IMR-90 (cell line): ENCODE measurements at regions of chr7 and their contacts with region 1.

Region 1: GRCh38 chr7:3300651-3301378 is at the start of gene SDK1:
- DNase-seq: peak; percentile 85
- ATAC-seq: peak; percentile 95
- H3K4me3 ChIP-seq: peak within 1 kb of the TSS; percentile 44
- H3K27ac ChIP-seq: no peak within 1 kb of the TSS
- H3K4me1 ChIP-seq: no peaks in the 10 kb centered on the region; the same call in 1 of the 2 replicates
- H3K27me3 ChIP-seq: peaks cover 14% of the 10 kb centered on the region
- CTCF ChIP-seq: peak; percentile 88
- POLR2A ChIP-seq: no peak
- RAD21 ChIP-seq: peak; percentile 81
- total RNA-seq, gene SDK1: 1.1 and 1.6 TPM in 2 replicates

Region 2: GRCh38 chr7:3439333-3440030 is 138.7 kb after region 1 on chr7:
- CTCF ChIA-PET with region 1: no interaction called
- POLR2A ChIA-PET with region 1: no interaction called
- dilution Hi-C with region 1: no loop called
- in situ Hi-C with region 1: no loop called
- intact Hi-C with region 1: loop called (anchors 10 kb)
- DNase-seq: peak; percentile 99
- ATAC-seq: peak; percentile 87
- H3K4me3 ChIP-seq: no peak overlapping the region
- H3K27ac ChIP-seq: peak overlapping the region; percentile 61; the same call in 1 of the 2 replicates
- H3K4me1 ChIP-seq: peaks cover 7% of the 10 kb centered on the region
- H3K27me3 ChIP-seq: no peaks in the 10 kb centered on the region
- CTCF ChIP-seq: no peak
- POLR2A ChIP-seq: no peak
- RAD21 ChIP-seq: no peak

Region 3: GRCh38 chr7:3482147-3482964 is 181.5 kb after region 1 on chr7:
- CTCF ChIA-PET with region 1: no interaction called
- POLR2A ChIA-PET with region 1: no interaction called
- dilution Hi-C with region 1: no loop called
- in situ Hi-C with region 1: no loop called
- intact Hi-C with region 1: loop called (anchors 5 kb)
- DNase-seq: peak; percentile 35
- ATAC-seq: peak; percentile 81
- H3K4me3 ChIP-seq: no peak overlapping the region
- H3K27ac ChIP-seq: no peak overlapping the region
- H3K4me1 ChIP-seq: 0 out of 2 replicates have a peak, but pooled peaks cover 2% of the 10 kb centered on the region
- H3K27me3 ChIP-seq: no peaks in the 10 kb centered on the region
- CTCF ChIP-seq: peak; percentile 37
- POLR2A ChIP-seq: no peak
- RAD21 ChIP-seq: peak; percentile 39

Region 4: GRCh38 chr7:3668743-3669142 is 367.9 kb after region 1 on chr7:
- CTCF ChIA-PET with region 1: no interaction called
- POLR2A ChIA-PET with region 1: no interaction called
- dilution Hi-C with region 1: no loop called
- in situ Hi-C with region 1: no loop called
- intact Hi-C with region 1: loop called (anchors 10 kb)
- DNase-seq: no peak
- ATAC-seq: no peak
- H3K4me3 ChIP-seq: no peak overlapping the region
- H3K27ac ChIP-seq: no peak overlapping the region
- H3K4me1 ChIP-seq: peaks cover 3% of the 10 kb centered on the region; the same call in 1 of the 2 replicates
- H3K27me3 ChIP-seq: no peaks in the 10 kb centered on the region
- CTCF ChIP-seq: no peak
- POLR2A ChIP-seq: no peak
- RAD21 ChIP-seq: no peak

Region 5: GRCh38 chr7:3760651-3761050 is 459.8 kb after region 1 on chr7:
- CTCF ChIA-PET with region 1: no interaction called
- POLR2A ChIA-PET with region 1: no interaction called
- dilution Hi-C with region 1: no loop called
- in situ Hi-C with region 1: no loop called
- intact Hi-C with region 1: loop called (anchors 2 kb)
- DNase-seq: peak; percentile 16
- ATAC-seq: peak; percentile 15; the same call in 1 of the 2 replicates
- H3K4me3 ChIP-seq: no peak overlapping the region
- H3K27ac ChIP-seq: no peak overlapping the region
- H3K4me1 ChIP-seq: peaks cover 5% of the 10 kb centered on the region; the same call in 1 of the 2 replicates
- H3K27me3 ChIP-seq: peaks cover 1% of the 10 kb centered on the region; the same call in 1 of the 2 replicates
- CTCF ChIP-seq: no peak
- POLR2A ChIP-seq: no peak
- RAD21 ChIP-seq: no peak

Region 6: GRCh38 chr7:3897438-3898385 is 596.9 kb after region 1 on chr7:
- CTCF ChIA-PET with region 1: no interaction called
- POLR2A ChIA-PET with region 1: no interaction called
- dilution Hi-C with region 1: no loop called
- in situ Hi-C with region 1: no loop called
- intact Hi-C with region 1: loop called (anchors 1 kb)
- DNase-seq: peak; percentile 62
- ATAC-seq: peak; percentile 85
- H3K4me3 ChIP-seq: no peak overlapping the region
- H3K27ac ChIP-seq: no peak overlapping the region
- H3K4me1 ChIP-seq: no peaks in the 10 kb centered on the region; the same call in 1 of the 2 replicates
- H3K27me3 ChIP-seq: no peaks in the 10 kb centered on the region
- CTCF ChIP-seq: peak; percentile 65
- POLR2A ChIP-seq: no peak
- RAD21 ChIP-seq: peak; percentile 63

Region 7: DNA sequence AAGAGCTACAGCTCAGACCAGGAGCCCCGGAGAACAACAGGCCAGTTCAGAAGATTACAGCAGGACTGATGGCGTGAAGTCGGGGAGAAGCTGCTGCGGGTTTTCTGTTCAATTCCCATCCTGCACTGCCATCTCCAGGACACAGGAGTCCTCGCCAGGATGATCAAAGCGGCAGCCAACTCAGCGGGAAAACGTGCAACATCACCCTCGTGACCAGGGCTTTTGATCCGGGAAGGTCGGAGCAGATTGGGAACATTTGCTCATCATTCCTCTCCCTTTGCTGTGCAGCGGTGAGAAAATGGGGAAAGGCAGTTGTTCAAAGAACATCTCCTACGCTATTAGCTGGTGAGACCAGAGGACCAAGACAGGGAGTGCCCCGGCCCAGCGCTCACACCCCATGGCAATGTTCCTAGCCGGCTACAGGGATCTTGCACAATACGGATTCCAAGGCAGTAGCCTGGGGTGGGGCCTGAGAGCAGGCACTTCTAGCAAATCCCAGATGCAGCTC is 1330.9 kb after region 1 on chr7:
- CTCF ChIA-PET with region 1: no interaction called
- POLR2A ChIA-PET with region 1: no interaction called
- dilution Hi-C with region 1: no loop called
- in situ Hi-C with region 1: no loop called
- intact Hi-C with region 1: loop called (anchors 1 kb)
- DNase-seq: peak; percentile 91
- ATAC-seq: peak; percentile 95
- H3K4me3 ChIP-seq: peak overlapping the region; percentile 42
- H3K27ac ChIP-seq: peak overlapping the region; percentile 85
- H3K4me1 ChIP-seq: peaks cover 4% of the 10 kb centered on the region; the same call in 1 of the 2 replicates
- H3K27me3 ChIP-seq: peaks cover 5% of the 10 kb centered on the region; the same call in 1 of the 2 replicates
- CTCF ChIP-seq: peak; percentile 81
- POLR2A ChIP-seq: no peak
- RAD21 ChIP-seq: peak; percentile 86